CD8-positive, alpha-beta memory T cell (primary cell): ENCODE measurements at regions of chr1 and their contacts with region 1.

Region 1: DNA sequence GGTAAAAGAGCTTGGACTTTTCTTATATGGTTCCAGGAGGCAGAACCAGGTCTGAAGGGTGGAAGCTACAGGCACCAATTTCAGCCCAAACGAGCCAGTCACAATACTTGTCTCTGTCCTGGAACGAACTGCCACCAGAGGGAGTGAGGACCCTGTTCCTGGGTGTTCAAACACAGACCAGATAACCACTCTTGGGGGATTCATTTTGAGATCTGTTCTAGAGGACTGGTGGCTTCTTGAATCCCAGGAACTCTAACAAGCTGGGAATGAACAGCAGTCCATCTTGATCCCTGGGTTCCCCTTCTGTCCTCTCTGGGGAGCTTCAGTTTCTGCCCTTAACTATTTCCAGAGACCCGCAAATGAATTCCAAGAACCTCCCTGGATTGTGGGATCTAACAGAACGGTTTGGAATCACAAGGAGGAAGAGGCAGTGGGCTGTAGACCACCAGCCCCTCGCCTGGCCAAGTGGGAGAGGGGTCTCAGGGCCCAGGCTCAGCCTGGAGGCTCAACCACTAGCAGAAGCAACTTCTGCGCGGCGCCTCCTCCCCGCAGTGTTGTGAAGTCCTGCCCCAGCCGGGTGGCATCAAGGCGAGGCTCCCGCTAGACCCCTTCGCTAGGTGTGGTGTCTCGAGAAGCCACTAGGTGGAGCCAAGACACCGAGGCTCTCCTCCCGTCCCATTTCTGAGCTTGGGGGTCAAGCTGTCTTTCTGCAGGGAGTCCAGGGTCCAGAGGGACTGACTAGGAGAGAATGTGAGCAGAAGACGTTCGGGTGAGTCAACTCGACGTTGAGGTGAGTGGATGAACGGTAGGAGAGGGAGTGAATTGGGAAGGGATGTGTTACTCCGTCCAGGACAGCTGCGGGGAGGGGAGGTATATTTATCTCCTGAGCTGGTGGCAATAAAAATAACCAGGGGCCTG is 12.1 kb upstream of the NES start:
- DNase-seq: peak; percentile 63 to 84 (median 70)
- H3K4me3 ChIP-seq: no peak overlapping the region
- H3K4me3 Mint-ChIP-seq: peak overlapping the region in 2 of 7 donors; percentile 61 to 76
- H3K27ac ChIP-seq: no peak overlapping the region
- H3K27ac Mint-ChIP-seq: peak overlapping the region in 1 of 8 donors; percentile 83
- H3K4me1 ChIP-seq: peaks cover 7% of the 10 kb centered on the region
- H3K4me1 Mint-ChIP-seq: peaks cover 12 to 33% (median 18%) of the 10 kb centered on the region in 3 donors
- H3K27me3 ChIP-seq: peaks cover 25% of the 10 kb centered on the region
- H3K27me3 Mint-ChIP-seq: peaks cover 46 to 59% of the 10 kb centered on the region in 2 donors

Region 2: DNA sequence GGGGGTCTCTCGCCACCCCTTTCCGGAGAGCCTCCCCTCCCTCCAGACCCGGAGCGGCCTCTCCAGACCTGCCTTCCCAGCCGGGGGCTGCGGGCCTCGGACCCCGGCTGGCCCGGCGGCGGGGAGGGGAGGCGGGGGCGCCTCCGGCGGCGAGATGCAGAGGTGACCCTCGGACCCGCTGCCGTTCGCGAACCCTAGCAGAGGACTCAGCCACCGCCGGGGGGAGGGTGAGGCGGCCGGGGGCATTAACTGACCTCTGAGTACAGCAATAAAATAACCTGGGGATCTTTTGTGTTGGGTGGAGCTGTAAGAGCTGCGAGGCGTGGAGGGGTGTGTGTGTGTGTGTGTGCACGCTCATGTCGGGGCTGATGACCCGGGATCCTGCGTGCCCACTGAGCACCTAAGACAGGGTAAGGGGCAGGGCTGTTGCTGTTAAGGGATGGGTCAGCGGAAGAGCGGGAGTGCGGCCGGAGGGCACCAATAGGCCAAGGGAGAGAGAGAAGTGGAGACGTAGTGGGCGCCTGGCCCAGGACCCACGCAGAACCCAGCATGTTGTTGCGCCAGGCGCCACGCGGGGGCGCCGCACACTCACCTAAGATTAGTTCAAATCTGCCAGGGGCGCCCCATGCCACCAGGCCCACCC is 63.7 kb before region 1 on chr1:
- CTCF ChIA-PET with region 1: interaction called, 12 read pairs
- POLR2A ChIA-PET with region 1: no interaction called
- DNase-seq: peak; percentile 45 to 72 (median 59)
- H3K4me3 ChIP-seq: peak overlapping the region; percentile 32
- H3K4me3 Mint-ChIP-seq: peak overlapping the region; percentile 38 to 89 (median 80)
- H3K27ac ChIP-seq: peak overlapping the region; percentile 35
- H3K27ac Mint-ChIP-seq: peak overlapping the region in 4 of 8 donors; percentile 10 to 45 (median 18)
- H3K4me1 ChIP-seq: peaks cover 18% of the 10 kb centered on the region
- H3K4me1 Mint-ChIP-seq: peaks cover 8 to 18% (median 8%) of the 10 kb centered on the region in 3 donors
- H3K27me3 ChIP-seq: peaks cover 36% of the 10 kb centered on the region
- H3K27me3 Mint-ChIP-seq: peaks cover 35 to 54% of the 10 kb centered on the region in 2 donors

Region 3: DNA sequence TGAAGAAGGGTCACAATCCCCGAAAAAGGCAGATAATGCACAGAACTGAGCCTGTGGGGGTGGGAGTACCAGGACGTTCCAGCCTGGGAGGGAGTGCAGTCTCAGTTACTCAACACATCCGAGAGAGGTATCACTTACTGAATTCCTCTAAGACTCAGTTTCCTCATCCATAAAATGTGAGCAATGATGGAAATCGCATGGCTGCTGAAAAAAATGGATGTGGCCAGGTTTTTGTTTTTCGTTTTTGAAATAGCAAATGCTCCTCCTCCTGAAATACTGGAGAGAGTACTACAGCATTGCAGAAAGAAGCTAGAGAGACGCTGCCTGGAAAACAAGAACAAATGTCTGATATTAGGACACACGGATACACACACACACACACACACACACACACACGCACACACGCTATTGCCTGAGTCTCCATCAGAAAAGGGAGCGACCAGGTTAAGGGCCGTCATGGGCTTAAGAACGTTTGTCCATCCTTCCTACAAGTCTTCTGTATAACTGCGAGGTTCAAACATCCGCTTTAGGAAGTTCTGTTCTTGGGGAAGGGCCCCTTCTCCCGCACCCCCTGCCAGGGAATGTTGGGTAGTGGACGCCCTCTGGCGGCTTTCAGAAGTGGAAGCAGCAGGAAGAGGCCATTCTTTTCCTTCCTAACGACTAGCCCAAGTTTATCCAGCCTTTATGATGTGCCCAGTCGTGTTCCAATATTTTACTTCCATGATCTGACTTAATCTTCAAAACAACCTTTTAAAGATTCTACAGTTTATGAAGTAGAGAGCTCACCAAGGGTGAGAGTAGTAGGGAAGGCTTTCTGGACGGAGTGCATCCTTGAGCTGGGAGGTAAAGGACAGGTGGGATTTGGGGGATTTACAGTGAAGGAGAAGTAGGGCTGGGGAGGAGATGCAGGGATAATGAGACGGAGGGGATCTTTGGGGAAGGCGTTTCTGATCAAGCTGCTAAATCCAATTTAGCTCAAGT is 11.4 kb before region 1 on chr1:
- CTCF ChIA-PET with region 1: interaction called, 16 read pairs
- POLR2A ChIA-PET with region 1: no interaction called
- DNase-seq: peak in 3 of 5 donors; percentile 8 to 38 (median 27)
- H3K4me3 ChIP-seq: peak overlapping the region; percentile 26
- H3K4me3 Mint-ChIP-seq: peak overlapping the region in 4 of 7 donors; percentile 20 to 54 (median 38)
- H3K27ac ChIP-seq: peak overlapping the region; percentile 33
- H3K27ac Mint-ChIP-seq: peak overlapping the region in 1 of 8 donors; percentile 3
- H3K4me1 ChIP-seq: peaks cover 10% of the 10 kb centered on the region
- H3K4me1 Mint-ChIP-seq: peaks cover 8 to 16% (median 13%) of the 10 kb centered on the region in 3 donors
- H3K27me3 ChIP-seq: peaks cover 39% of the 10 kb centered on the region
- H3K27me3 Mint-ChIP-seq: peaks cover 48 to 73% of the 10 kb centered on the region in 2 donors

Region 4: GRCh38 chr1:156711011-156711817 is 21.9 kb after region 1 on chr1:
- CTCF ChIA-PET with region 1: interaction called, 120 read pairs
- POLR2A ChIA-PET with region 1: interaction called, 6 read pairs
- DNase-seq: no peak
- H3K4me3 ChIP-seq: no peak overlapping the region
- H3K4me3 Mint-ChIP-seq: no peak overlapping the region
- H3K27ac ChIP-seq: no peak overlapping the region
- H3K27ac Mint-ChIP-seq: peak overlapping the region in 1 of 8 donors; percentile 73
- H3K4me1 ChIP-seq: peaks cover 10% of the 10 kb centered on the region
- H3K4me1 Mint-ChIP-seq: peaks cover 9 to 24% (median 14%) of the 10 kb centered on the region in 3 donors
- H3K27me3 ChIP-seq: no peaks in the 10 kb centered on the region
- H3K27me3 Mint-ChIP-seq: peaks cover 0 to 2% of the 10 kb centered on the region in 2 donors

Region 5: GRCh38 chr1:156728597-156729462 is 39.5 kb after region 1 on chr1 and contains the start of gene ISG20L2:
- CTCF ChIA-PET with region 1: interaction called, 183 read pairs
- POLR2A ChIA-PET with region 1: interaction called, 9 read pairs
- DNase-seq: peak; percentile 94 to 98 (median 96)
- H3K4me3 ChIP-seq: peak within 1 kb of the TSS; percentile 97
- H3K4me3 Mint-ChIP-seq: peak within 1 kb of the TSS in 1 of 7 donors; percentile 55
- H3K27ac ChIP-seq: peak within 1 kb of the TSS; percentile 98
- H3K27ac Mint-ChIP-seq: peak within 1 kb of the TSS in 4 of 8 donors; percentile 99 to 100 (median 99)
- H3K4me1 ChIP-seq: peaks cover 37% of the 10 kb centered on the region
- H3K4me1 Mint-ChIP-seq: peaks cover 24 to 27% (median 24%) of the 10 kb centered on the region in 3 donors
- H3K27me3 ChIP-seq: no peaks in the 10 kb centered on the region
- H3K27me3 Mint-ChIP-seq: peaks cover 0 to 2% of the 10 kb centered on the region in 2 donors
- total RNA-seq, gene ISG20L2: 69.4 to 75.9 TPM

Region 6: GRCh38 chr1:156797212-156797871 is 108.0 kb after region 1 on chr1:
- CTCF ChIA-PET with region 1: interaction called, 10 read pairs
- POLR2A ChIA-PET with region 1: no interaction called
- DNase-seq: peak; percentile 35 to 70 (median 56)
- H3K4me3 ChIP-seq: no peak overlapping the region
- H3K4me3 Mint-ChIP-seq: no peak overlapping the region
- H3K27ac ChIP-seq: no peak overlapping the region
- H3K27ac Mint-ChIP-seq: peak overlapping the region in 5 of 8 donors; percentile 21 to 72 (median 52)
- H3K4me1 ChIP-seq: no peaks in the 10 kb centered on the region
- H3K4me1 Mint-ChIP-seq: peaks cover 17 to 28% (median 18%) of the 10 kb centered on the region in 3 donors
- H3K27me3 ChIP-seq: no peaks in the 10 kb centered on the region
- H3K27me3 Mint-ChIP-seq: peaks cover 0 to 5% of the 10 kb centered on the region in 2 donors

Region 7: DNA sequence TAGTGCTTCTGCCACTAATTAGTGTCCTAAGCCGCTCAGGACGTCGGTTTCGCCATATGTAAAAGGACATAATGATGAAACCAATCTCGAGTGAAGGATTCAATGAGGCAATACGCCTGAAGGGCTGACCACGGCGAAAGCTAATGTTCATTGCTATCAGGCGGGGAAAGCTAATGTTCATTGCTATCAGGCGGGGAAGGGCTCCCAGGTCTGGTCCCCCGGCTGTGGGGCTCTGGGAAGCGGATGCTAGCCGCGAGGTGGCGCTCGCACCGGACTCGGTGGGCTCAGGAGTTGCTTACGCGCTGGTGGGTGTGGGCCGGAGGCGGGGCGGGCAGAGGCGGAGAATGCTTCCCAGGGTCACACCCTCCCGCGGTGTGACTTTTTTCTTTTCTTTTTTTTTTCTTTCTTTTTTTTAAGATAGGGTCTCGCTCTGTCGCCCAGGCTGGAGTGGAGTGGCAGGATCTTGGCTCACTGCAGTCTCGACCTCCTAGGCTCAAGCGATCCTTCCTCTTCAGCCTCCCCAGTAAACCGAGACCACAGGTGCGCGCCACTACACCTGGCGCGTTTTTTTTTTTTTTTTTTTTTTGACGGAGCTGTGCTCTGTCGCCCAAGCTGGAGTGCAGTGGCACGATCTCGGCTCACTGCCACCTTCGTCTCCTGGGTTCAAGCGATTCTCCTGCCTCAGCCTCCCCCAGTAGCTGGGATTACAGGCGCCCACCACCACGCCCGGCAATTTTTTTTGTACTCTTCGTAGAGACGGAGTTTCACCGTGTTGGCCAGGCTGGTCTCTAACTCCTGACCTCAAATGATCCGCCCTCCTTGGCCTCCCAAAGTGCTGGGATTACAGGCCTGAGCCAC is 203.1 kb after region 1 on chr1:
- CTCF ChIA-PET with region 1: interaction called, 21 read pairs
- POLR2A ChIA-PET with region 1: no interaction called
- DNase-seq: peak; percentile 76 to 86 (median 77)
- H3K4me3 ChIP-seq: peak overlapping the region; percentile 20
- H3K4me3 Mint-ChIP-seq: peak overlapping the region; percentile 70 to 83 (median 75)
- H3K27ac ChIP-seq: no peak overlapping the region
- H3K27ac Mint-ChIP-seq: peak overlapping the region in 1 of 8 donors; percentile 72
- H3K4me1 ChIP-seq: peaks cover 16% of the 10 kb centered on the region
- H3K4me1 Mint-ChIP-seq: peaks cover 15 to 20% (median 16%) of the 10 kb centered on the region in 3 donors
- H3K27me3 ChIP-seq: peaks cover 3% of the 10 kb centered on the region
- H3K27me3 Mint-ChIP-seq: peaks cover 46 to 69% of the 10 kb centered on the region in 2 donors